Calu3 (cell line): ENCODE measurements at regions of chr4 and their contacts with region 1.

Region 1: DNA sequence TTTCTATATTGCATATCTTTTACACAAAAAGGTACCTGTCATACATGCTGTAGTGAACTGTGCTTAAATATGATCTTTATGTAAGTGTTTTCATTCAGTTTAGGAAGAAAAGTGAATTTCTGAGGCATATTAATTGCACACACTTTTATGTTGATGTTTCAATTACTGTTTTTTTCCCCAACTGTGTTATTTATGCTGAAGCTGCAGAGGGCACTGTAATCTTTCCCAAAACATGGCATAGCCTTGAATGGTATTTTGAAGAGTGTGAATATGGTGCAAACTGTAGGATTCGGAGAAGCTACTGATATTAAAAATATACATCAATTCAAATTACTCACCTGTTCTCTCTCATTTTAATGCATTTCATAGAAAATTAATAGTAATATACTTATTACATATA is 6.0 kb upstream of the CENPE start:
- DNase-seq: peak; percentile 4
- H3K4me3 Mint-ChIP-seq: no peak overlapping the region
- H3K27ac Mint-ChIP-seq: no peak overlapping the region
- H3K4me1 Mint-ChIP-seq: peaks cover 26% of the 10 kb centered on the region
- H3K27me3 Mint-ChIP-seq: no peaks in the 10 kb centered on the region
- CTCF ChIP-seq: no peak

Region 2: DNA sequence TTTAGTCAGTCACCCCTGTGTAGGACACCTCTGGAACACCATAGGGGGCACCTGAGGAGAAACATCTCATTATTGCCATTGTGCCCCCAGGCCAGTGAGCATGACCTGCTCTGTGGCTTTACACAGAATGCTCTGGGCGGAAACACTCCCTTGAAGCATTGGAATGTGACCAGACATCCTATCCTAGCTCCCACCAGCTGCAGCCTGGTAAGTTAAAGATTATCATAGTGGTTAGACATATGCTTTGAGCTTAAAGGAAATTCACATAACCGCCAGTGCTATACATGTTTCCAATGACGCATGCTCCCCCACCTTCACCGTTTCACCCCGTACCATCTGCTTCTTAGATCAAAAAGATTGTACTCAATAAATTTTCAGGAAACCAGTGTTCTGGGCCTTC is 211.7 kb after region 1 on chr4:
- CTCF ChIA-PET with region 1: no interaction called
- intact Hi-C with region 1: loop called (anchors 10 kb)
- DNase-seq: peak; percentile 45
- H3K4me3 Mint-ChIP-seq: no peak overlapping the region
- H3K27ac Mint-ChIP-seq: peak overlapping the region; percentile 54
- H3K4me1 Mint-ChIP-seq: peaks cover 33% of the 10 kb centered on the region
- H3K27me3 Mint-ChIP-seq: no peaks in the 10 kb centered on the region
- CTCF ChIP-seq: no peak

Region 3: DNA sequence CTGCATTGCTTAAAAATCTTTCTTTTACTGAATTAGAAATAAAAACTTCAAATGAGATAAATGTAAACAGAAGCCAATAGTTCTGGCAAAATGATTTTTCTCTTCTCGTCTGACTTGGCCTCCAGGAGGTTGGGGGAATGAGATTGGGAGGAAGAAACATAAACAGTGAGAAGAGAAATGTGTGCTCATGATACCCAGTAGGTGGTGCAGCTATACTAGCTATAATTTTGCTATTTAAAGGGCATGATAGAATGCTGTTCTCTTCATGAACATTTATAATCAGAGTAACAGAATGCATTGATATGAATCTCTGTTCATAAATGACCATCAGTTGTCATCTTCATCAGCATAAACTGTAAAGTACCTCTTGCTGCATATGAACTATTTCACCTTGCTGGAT is 430.1 kb after region 1 on chr4:
- CTCF ChIA-PET with region 1: interaction called, 3 read pairs
- intact Hi-C with region 1: loop called (anchors 5 kb)
- DNase-seq: no peak
- H3K4me3 Mint-ChIP-seq: no peak overlapping the region
- H3K27ac Mint-ChIP-seq: no peak overlapping the region
- H3K4me1 Mint-ChIP-seq: no peaks in the 10 kb centered on the region
- H3K27me3 Mint-ChIP-seq: no peaks in the 10 kb centered on the region
- CTCF ChIP-seq: no peak

Region 4: GRCh38 chr4:103915224-103915869 is 711.2 kb after region 1 on chr4:
- CTCF ChIA-PET with region 1: no interaction called
- intact Hi-C with region 1: loop called (anchors 1 kb)
- DNase-seq: no peak
- H3K4me3 Mint-ChIP-seq: no peak overlapping the region
- H3K27ac Mint-ChIP-seq: no peak overlapping the region
- H3K4me1 Mint-ChIP-seq: no peaks in the 10 kb centered on the region
- H3K27me3 Mint-ChIP-seq: no peaks in the 10 kb centered on the region
- CTCF ChIP-seq: no peak